ENCODE measurements at regions of chr14 and their contacts with region 1.

Region 1: DNA sequence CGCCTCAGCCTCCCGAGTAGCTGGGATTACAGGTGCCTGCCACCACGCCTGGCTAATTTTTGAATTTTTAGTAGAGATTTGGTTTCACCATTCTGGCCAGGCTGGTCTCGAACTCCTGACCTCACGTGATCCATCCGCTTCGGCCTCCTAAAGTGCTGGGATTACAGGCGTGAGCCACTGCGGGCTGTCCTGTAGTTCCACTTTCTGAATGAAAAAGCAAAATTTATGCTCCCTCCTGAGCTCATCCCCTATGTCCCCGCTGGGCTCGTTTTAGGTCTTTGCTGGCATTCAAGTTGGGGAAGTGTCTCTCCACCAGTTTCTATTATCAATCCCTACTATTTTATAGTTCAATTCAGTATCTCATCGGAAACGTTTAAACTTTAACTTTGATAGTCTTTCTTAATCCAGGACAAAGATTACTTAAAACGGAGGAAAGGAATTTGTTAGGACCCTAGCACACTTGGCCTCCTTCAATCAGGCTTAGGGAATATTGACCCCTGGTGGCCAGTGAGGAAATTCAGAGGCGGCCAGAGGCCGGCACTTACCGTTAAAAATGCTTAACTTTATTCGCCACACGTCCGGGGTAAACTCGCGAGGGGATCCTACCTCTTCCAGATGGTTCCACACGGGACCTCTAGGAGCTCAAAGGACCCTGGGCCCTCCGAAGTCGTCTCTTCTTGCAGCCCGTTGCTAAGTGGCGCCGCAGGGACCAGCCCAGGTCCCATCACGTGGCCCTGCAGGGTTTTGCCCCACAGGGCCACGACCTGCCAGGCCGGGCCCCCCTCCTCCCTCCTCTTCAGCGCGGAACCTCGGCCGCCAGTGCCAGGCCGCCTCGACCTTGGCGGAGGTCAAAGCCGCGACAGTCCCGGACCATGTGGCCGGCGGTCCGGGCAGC is 11.4 kb upstream of the DNAL1 start:
- DNase-seq: peak; percentile 59 to 64
- H3K4me3 ChIP-seq: peak overlapping the region; percentile 54
- H3K27ac ChIP-seq: peak overlapping the region; percentile 57 to 61
- H3K4me1 ChIP-seq: no peaks in the 10 kb centered on the region
- H3K27me3 ChIP-seq: no peaks in the 10 kb centered on the region
- CTCF ChIP-seq: peak; percentile 79 to 89 (median 83)
- POLR2A ChIP-seq: no peak

Region 2: GRCh38 chr14:73524493-73524892 is 108.9 kb before region 1 on chr14:
- intact Hi-C with region 1: loop called (anchors 10 kb)
- DNase-seq: no peak
- H3K4me3 ChIP-seq: no peak overlapping the region
- H3K27ac ChIP-seq: no peak overlapping the region
- H3K4me1 ChIP-seq: no peaks in the 10 kb centered on the region
- H3K27me3 ChIP-seq: no peaks in the 10 kb centered on the region
- CTCF ChIP-seq: no peak
- POLR2A ChIP-seq: no peak